Mammary epithelial cell (primary cell): ENCODE measurements at regions of chr10 and their contacts with region 1.

Region 1: DNA sequence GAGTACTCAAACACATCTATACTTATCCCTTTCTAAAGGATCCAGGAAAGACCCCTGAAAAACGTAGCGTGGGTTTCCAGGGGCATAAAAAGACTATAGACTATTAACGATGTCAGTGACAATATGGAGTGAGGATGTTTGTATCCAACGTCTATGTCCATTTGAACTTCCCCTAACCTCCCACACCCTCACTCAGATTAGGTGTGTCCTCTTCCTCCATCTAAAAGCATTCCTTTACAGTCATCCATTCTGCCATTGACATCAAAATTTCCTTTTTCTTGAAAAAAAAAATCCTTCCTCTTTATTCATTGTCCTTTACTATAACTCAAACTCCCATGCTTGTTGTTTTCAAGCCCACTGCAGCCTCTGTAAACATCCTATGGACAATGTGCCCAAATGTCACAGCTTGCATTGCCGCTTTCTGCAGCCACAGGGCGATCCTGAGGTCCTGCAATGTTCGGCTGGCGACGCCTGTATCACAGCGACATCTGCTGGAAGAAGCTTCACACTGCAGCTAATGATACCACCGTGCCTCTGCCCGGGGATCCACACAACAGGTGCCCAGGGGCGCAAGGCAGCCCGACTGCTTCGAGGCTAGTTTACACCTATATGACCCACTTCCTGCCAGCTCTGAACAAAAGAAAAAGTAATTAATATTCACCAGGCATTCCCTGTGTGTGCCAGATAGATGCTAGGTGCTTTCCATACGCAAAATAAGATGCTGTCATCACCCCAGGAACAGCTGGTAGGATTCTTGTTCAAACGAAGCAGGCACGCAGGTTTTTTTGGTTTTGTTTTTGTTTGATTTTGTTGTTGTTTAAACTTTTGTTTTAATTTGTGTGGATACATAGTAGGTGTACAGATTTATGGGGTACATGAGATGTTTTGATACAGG is 267.9 kb upstream of the GHITM start:
- DNase-seq: peak; percentile 42
- H3K4me3 ChIP-seq: no peak overlapping the region
- H3K27ac ChIP-seq: no peak overlapping the region
- H3K4me1 ChIP-seq: no peaks in the 10 kb centered on the region
- H3K27me3 ChIP-seq: no peaks in the 10 kb centered on the region
- CTCF ChIP-seq: peak; percentile 92 to 97

Region 2: GRCh38 chr10:82796510-82796909 is 1074.9 kb before region 1 on chr10:
- CTCF ChIA-PET with region 1: no interaction called
- dilution Hi-C with region 1: no loop called
- in situ Hi-C with region 1: no loop called
- intact Hi-C with region 1: loop called (anchors 5 kb)
- DNase-seq: no peak
- H3K4me3 ChIP-seq: no peak overlapping the region
- H3K27ac ChIP-seq: no peak overlapping the region
- H3K4me1 ChIP-seq: no peaks in the 10 kb centered on the region
- H3K27me3 ChIP-seq: no peaks in the 10 kb centered on the region
- CTCF ChIP-seq: peak; percentile 45 to 52

Region 3: DNA sequence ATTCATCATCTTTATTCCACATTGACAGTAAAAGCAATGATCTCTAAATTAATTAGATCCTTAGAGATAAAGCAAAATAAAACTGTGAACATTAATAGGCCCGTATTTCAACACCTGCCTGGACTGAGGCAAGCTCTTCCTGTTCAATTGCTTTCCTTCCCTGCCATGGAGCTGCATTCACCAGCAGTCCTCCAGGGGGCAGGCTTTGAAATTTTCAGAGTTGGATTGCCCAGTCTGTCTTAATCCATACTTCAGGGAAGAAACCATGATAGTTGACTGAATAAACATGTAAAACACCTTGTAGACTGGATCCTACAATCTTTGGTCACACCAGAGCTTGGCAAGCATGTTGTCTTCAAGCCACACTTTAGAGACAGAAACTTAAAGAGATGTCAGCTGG is 1059.8 kb before region 1 on chr10:
- CTCF ChIA-PET with region 1: no interaction called
- dilution Hi-C with region 1: no loop called
- in situ Hi-C with region 1: no loop called
- intact Hi-C with region 1: loop called (anchors 2 kb)
- DNase-seq: peak; percentile 26
- H3K4me3 ChIP-seq: no peak overlapping the region
- H3K27ac ChIP-seq: no peak overlapping the region
- H3K4me1 ChIP-seq: peaks cover 15% of the 10 kb centered on the region
- H3K27me3 ChIP-seq: no peaks in the 10 kb centered on the region
- CTCF ChIP-seq: peak; percentile 63 to 65

Region 4: DNA sequence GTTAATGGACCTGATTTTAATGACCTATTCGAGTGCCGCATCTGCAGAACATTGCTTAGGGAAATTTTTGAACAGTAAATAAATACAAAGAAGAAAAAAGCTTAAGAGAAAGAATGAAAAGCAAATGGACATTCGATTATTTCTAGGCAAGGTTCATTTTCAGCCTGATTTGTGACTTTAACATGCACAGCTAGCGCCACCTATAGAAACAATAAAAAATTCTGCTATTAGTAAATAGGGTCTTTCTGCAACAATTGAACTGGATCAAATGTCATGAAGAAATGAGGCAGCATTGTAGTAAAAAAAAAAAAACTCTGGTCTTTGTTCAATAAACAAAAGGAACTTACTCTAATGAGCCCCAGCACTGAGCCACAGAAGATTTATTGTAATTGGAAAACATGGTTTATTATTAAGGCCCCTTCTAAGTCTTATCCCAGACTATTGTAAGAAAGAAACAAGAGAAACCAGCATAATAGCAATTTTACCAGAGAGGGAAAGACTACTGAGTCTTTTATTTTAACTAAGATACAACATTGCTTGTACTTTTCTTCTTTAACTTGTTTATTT is 226.4 kb after region 1 on chr10:
- CTCF ChIA-PET with region 1: no interaction called
- dilution Hi-C with region 1: no loop called
- in situ Hi-C with region 1: no loop called
- intact Hi-C with region 1: loop called (anchors 2 kb)
- DNase-seq: no peak
- H3K4me3 ChIP-seq: no peak overlapping the region
- H3K27ac ChIP-seq: no peak overlapping the region
- H3K4me1 ChIP-seq: no peaks in the 10 kb centered on the region
- H3K27me3 ChIP-seq: peaks cover 3% of the 10 kb centered on the region
- CTCF ChIP-seq: peak; percentile 30 to 61